Activated CD8-positive, alpha-beta T cell treated with anti-CD3 and anti-CD28 coated beads, Interleukin-2, amount 10 ng/mL, durations not matched to agents 7 days and 5 days (primary cell): ENCODE measurements at regions of chr1 and their contacts with region 1.

Region 1: GRCh38 chr1:114346480-114347029 is 164.4 kb downstream of the TRIM33 start:
- DNase-seq: peak; percentile 98
- ATAC-seq: peak; percentile 99
- H3K4me3 Mint-ChIP-seq: peak overlapping the region; percentile 82
- H3K27ac Mint-ChIP-seq: peak overlapping the region; percentile 97
- H3K4me1 Mint-ChIP-seq: peaks cover 43% of the 10 kb centered on the region
- H3K27me3 Mint-ChIP-seq: no peaks in the 10 kb centered on the region

Region 2: DNA sequence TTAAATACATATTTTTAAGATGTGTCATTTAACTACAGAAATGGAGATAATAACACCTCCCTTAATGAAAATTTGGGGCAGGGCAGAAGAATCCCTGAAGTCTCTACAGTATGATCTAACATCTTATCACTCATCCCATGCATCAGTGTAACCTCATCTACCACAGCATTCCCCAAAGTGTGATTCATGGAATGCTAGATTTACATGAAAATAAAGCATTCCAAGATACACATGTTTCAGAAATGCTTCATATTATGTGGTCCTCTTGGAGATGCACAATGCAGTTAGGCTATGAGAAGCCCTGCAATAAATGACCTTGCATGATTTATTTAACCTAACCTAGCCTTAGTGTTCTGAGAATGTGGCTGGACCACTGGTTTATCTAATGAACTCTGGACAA is 26.0 kb before region 1 on chr1:
- CTCF ChIA-PET with region 1: interaction called, 17 read pairs
- POLR2A ChIA-PET with region 1: no interaction called
- DNase-seq: peak; percentile 1
- ATAC-seq: no peak
- H3K4me3 Mint-ChIP-seq: no peak overlapping the region
- H3K27ac Mint-ChIP-seq: no peak overlapping the region
- H3K4me1 Mint-ChIP-seq: peaks cover 3% of the 10 kb centered on the region
- H3K27me3 Mint-ChIP-seq: no peaks in the 10 kb centered on the region

Region 3: DNA sequence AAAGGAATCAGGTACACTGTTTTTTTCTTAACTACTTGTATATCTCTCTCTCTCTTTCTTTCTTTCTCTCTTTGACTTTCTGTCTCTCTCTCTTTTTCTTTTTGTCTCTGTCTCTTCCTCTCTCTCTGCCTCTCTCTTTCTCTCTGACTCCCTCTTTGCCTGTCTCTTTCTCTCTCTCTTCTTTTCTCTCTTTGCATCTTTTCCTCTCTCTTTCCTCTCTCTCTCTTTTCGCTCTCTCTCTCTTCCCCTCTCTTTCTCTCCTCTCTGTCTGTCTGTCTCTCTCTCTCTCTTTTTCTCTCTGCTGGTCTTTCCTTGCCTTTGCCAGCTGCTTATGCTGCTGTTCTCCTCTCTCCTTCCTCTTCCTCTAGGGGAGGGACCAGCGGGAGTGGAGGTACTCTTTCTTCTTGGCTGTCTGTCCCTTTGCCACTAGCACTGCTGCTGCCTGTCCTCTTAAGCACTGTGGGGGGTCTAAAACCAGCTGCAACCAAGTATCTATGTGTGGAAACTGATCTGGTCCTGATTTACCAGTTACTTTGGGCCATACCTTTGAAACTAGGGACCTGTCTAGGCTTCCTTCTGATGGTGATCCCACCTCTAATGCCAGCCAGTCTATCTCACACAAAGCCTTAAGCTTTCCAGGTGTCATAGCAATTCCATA is 21.4 kb after region 1 on chr1:
- CTCF ChIA-PET with region 1: interaction called, 12 read pairs
- POLR2A ChIA-PET with region 1: no interaction called
- DNase-seq: no peak
- ATAC-seq: no peak
- H3K4me3 Mint-ChIP-seq: no peak overlapping the region
- H3K27ac Mint-ChIP-seq: no peak overlapping the region
- H3K4me1 Mint-ChIP-seq: no peaks in the 10 kb centered on the region
- H3K27me3 Mint-ChIP-seq: no peaks in the 10 kb centered on the region

Region 4: GRCh38 chr1:114554577-114554976 is 208.0 kb after region 1 on chr1:
- CTCF ChIA-PET with region 1: interaction called, 12 read pairs
- POLR2A ChIA-PET with region 1: no interaction called
- DNase-seq: no peak
- ATAC-seq: no peak
- H3K4me3 Mint-ChIP-seq: no peak overlapping the region
- H3K27ac Mint-ChIP-seq: no peak overlapping the region
- H3K4me1 Mint-ChIP-seq: no peaks in the 10 kb centered on the region
- H3K27me3 Mint-ChIP-seq: no peaks in the 10 kb centered on the region

Region 5: DNA sequence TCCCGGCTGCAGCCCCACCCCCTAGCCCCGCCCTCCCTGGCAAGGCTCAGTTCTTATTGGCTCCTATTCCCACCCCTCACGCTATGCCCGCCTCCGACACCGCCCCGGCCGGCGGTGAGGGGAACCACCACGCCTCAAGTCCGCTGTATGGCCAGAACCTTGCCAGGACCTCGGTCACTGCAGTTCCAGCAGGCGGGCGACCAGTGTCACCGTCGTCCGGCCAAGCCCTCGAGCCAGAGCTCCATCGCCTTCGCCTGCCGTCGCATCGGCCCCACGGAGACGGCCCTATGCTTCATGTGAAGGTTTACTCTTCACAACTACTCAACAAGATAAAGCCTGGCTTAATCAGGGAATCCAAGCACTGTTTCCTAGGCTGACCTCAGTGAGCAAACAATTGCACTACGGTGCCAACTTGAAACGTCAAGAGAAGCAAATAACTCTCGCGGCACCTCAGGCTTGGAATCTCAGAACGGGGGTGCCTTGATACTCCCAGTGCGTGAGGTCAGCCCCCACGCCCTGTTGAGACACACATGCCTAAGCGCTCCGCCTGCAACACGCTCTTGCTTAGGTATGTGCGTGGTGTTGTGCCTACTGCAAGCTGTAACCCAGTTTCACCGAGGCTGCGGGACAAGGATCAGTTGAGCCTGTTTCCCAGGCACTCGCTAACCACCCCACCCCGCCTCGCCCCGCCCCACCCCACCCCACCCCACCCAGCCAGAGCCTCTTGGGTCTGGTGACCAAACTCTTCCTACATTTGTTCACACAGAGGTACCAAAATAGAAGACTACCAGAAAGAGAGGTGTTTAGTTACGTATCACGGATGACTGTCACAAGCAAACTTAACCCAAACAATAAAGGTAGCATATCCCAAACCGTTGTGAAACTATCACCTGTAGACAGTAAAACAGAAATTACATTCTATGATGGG is 323.8 kb after region 1 on chr1:
- CTCF ChIA-PET with region 1: interaction called, 23 read pairs
- POLR2A ChIA-PET with region 1: no interaction called
- DNase-seq: peak; percentile 90
- ATAC-seq: peak; percentile 99
- H3K4me3 Mint-ChIP-seq: peak overlapping the region; percentile 91
- H3K27ac Mint-ChIP-seq: peak overlapping the region; percentile 77
- H3K4me1 Mint-ChIP-seq: peaks cover 13% of the 10 kb centered on the region
- H3K27me3 Mint-ChIP-seq: peaks cover 19% of the 10 kb centered on the region